H1 (cell line): ENCODE measurements at regions of chr20 and their contacts with region 1.

Region 1: DNA sequence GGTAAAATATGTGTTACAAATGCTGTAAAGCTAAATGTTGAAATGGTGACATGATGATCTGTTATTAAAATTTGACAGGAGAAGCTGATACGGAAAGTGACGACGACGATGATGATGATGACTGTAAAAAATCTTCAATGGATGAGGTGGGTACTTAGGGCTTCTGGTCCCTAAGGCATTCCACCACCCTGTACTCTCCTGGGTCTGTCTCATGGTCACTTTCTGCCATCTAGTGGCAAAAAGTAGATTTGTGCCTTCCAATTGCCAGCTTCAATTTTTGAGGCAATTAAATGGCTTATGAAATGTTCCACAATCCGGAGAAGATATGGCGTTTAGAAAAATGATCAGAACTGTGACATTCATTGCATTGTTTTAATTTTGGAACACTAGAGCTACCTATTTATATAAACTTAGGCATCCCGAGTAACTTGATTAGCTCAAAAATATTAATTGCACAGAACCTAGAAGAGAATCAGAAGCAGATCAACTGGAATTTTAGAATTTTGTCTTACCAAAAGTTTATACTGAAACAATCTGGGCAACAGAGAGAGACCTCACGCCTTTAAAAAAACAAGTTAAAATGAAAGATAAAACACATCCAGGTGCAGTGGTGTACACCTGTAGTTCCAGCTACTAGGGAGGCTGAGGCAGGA is 346.5 kb upstream of the PLCB4 start:
- DNase-seq: no peak
- H3K4me3 ChIP-seq: no peak overlapping the region
- H3K27ac ChIP-seq: no peak overlapping the region
- H3K4me1 ChIP-seq: no peaks in the 10 kb centered on the region
- H3K27me3 ChIP-seq: no peaks in the 10 kb centered on the region
- CTCF ChIP-seq: peak; percentile 14 to 78 (median 75)
- EP300 ChIP-seq: no peak
- POLR2A ChIP-seq: no peak
- RAD21 ChIP-seq: peak; percentile 93 to 95

Region 2: GRCh38 chr20:7980332-7981046 is 741.9 kb before region 1 on chr20:
- CTCF ChIA-PET with region 1: interaction called, 37 read pairs
- POLR2A ChIA-PET with region 1: no interaction called
- DNase-seq: peak in 1 of 2 experiments; percentile 1
- H3K4me3 ChIP-seq: no peak overlapping the region
- H3K27ac ChIP-seq: no peak overlapping the region
- H3K4me1 ChIP-seq: peaks cover 0 to 11% (median 2%) of the 10 kb centered on the region in 4 experiments; a peak in 3 of 7 replicates
- H3K27me3 ChIP-seq: no peaks in the 10 kb centered on the region
- CTCF ChIP-seq: peak in 2 of 3 experiments; percentile 40 to 48; a peak in 3 of 4 replicates
- EP300 ChIP-seq: no peak
- POLR2A ChIP-seq: no peak
- RAD21 ChIP-seq: peak; percentile 36 to 52; a peak in 3 of 4 replicates

Region 3: GRCh38 chr20:8305449-8305978 is 416.9 kb before region 1 on chr20:
- CTCF ChIA-PET with region 1: interaction called, 11 read pairs
- POLR2A ChIA-PET with region 1: no interaction called
- DNase-seq: peak; percentile 72 to 75
- H3K4me3 ChIP-seq: no peak overlapping the region
- H3K27ac ChIP-seq: no peak overlapping the region
- H3K4me1 ChIP-seq: peaks cover 0 to 5% (median 2%) of the 10 kb centered on the region in 4 experiments; a peak in 4 of 7 replicates
- H3K27me3 ChIP-seq: no peaks in the 10 kb centered on the region
- CTCF ChIP-seq: peak; percentile 77 to 91 (median 79)
- EP300 ChIP-seq: no peak
- POLR2A ChIP-seq: no peak
- RAD21 ChIP-seq: peak; percentile 64 to 71

Region 4: DNA sequence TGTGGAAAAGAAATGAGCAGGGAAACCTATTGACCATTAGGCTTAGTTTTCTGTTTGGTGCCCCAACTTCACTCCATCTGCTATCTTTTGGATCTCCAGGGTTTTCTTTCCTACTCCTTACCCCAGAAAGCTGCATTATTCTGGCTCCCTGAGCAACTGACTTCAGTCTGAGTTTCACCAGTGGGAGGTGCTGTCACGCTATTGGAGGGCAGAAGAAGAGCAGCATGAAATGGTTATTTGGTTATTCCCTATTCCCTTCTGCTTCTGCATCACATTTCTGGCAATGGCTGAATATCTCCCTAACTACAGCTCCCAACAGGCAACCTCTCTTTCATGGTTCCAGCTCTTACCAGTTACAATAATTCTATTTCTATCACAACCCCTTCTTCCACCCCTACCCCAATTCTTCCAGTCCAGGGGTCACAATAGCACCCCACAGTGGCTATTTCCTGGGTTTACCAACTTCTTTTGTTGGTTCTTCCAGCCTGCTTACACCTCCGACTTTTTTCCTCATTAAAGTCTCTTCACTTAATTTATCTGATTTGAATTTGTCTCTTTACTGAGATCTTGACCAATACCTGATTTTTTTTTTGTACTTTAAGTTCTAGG is 278.8 kb before region 1 on chr20:
- CTCF ChIA-PET with region 1: interaction called, 13 read pairs
- POLR2A ChIA-PET with region 1: no interaction called
- DNase-seq: peak in 1 of 2 experiments; percentile 59
- H3K4me3 ChIP-seq: no peak overlapping the region
- H3K27ac ChIP-seq: no peak overlapping the region
- H3K4me1 ChIP-seq: no peaks in the 10 kb centered on the region
- H3K27me3 ChIP-seq: no peaks in the 10 kb centered on the region
- CTCF ChIP-seq: peak; percentile 14 to 57 (median 46)
- EP300 ChIP-seq: no peak
- POLR2A ChIP-seq: no peak
- RAD21 ChIP-seq: peak; percentile 40 to 52; a peak in 3 of 4 replicates

Region 5: DNA sequence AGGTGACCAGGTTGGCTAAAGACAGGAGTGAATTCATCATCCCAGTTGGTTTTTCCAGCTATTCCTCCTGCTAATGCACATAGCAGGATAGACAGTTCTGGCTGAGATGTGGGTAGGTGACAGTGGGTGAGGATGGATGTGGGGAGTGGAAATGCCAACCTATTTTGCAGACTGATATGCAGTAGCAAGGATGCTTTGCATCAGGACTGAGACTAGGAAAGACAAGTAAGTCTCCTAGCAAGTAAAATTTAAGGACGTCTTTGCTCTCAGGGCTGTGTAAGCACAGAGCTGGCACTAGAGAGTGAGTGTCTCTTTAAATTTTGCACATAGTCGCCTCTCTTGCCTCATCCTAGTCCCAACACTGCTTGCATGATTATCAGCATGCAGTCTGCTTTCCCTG is 21.6 kb before region 1 on chr20:
- CTCF ChIA-PET with region 1: interaction called, 15 read pairs
- POLR2A ChIA-PET with region 1: no interaction called
- DNase-seq: no peak
- H3K4me3 ChIP-seq: no peak overlapping the region
- H3K27ac ChIP-seq: no peak overlapping the region
- H3K4me1 ChIP-seq: no peaks in the 10 kb centered on the region
- H3K27me3 ChIP-seq: no peaks in the 10 kb centered on the region
- CTCF ChIP-seq: no peak
- EP300 ChIP-seq: no peak
- POLR2A ChIP-seq: no peak
- RAD21 ChIP-seq: no peak

Region 6: GRCh38 chr20:8912731-8913130 is 190.3 kb after region 1 on chr20:
- CTCF ChIA-PET with region 1: no interaction called
- POLR2A ChIA-PET with region 1: no interaction called
- DNase-seq: no peak
- H3K4me3 ChIP-seq: no peak overlapping the region
- H3K27ac ChIP-seq: no peak overlapping the region
- H3K4me1 ChIP-seq: peaks cover 0 to 4% (median 1%) of the 10 kb centered on the region in 4 experiments; a peak in 3 of 7 replicates
- H3K27me3 ChIP-seq: no peaks in the 10 kb centered on the region
- CTCF ChIP-seq: no peak
- EP300 ChIP-seq: no peak
- POLR2A ChIP-seq: no peak
- RAD21 ChIP-seq: no peak